Left ventricle myocardium superior (tissue), 1 donor: ENCODE measurements at regions of chr17 and their contacts with region 1.

Region 1: GRCh38 chr17:76458580-76459490 is 5.9 kb upstream of the UBE2O start:
- DNase-seq: peak; percentile 78
- ATAC-seq: peak; percentile 86

Region 2: DNA sequence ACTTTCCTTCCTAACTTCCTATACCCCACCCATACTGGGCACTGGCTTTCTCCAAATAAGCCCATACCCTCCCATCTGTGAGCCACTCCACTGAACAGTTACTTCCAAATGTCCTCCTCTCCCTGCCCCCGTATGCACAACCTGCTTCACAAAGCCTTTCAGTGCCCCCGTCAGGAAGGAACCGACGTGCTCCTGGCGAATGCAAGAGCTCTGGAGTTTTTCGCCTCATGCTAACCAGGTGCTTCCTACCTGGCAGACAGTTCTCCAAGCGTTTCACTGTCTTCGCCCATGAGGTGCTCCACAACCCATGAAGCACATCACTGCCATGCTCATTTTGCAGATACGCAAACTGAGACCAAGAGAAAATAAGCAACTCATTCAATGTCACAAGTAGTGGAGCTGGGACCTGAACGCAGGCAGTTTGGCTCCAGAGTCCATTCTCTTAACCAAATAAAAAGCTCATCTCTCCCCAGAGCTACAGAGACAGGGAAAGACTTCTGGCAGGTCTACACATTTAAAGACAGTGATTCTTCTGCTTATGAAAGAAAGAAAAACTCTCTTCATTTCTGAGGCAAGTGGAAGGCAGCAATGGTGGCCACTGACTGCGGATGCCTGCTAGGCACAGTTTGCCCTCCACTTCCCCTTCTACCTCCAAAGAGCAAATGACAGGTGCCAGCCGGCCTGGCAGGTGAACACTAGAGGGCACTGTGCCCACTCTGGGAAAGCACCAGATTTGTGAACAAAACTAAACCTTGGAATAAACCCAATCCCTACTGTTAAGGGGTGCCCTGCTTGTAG is 50.6 kb before region 1 on chr17:
- intact Hi-C with region 1: loop called (anchors 5 kb)
- DNase-seq: peak; percentile 73
- ATAC-seq: peak; percentile 10